ENCODE measurements at regions of chr17 and their contacts with region 1.

Region 1: DNA sequence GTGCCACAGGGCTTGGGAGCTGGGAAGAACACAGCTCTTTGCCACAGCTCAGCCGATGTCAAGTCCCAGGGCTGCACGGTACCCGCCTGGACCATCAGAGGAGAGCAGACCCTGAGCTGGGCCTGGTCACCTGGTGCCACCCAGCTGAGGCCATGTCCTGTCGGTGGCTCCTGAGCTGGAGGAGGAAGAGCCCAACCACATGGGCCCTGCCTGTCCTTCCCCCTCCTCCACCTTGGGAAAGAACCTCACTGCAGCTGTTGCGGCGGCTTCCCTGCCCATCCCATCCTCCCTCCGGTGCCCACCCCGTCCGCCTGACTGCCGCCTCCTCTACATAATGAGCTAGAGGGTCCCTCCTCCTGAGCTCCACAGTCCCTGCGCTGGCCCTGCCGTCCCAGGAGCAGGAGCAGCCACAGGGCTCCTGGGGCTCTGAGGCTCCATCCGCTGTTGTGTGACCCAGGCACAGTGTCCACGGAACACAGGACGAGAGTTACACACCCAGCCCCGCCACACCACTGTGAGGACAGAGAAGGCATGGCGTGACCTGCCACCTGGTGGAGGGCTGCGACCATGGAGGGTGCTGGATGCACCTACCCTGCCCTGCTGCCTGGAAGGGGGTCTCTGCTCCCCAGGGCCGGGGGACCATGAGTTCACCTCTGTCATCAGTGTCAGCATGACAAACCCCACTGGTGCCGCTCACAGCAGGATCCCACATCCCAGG is 21.4 kb upstream of the CHMP6 start:
- DNase-seq: peak; percentile 46 to 74 (median 64)
- H3K4me3 ChIP-seq: peak overlapping the region in 3 of 59 donors; percentile 5 to 21 (median 6)
- H3K27ac ChIP-seq: peak overlapping the region in 14 of 59 donors; percentile 21 to 92 (median 82)
- H3K27me3 ChIP-seq: no peaks in the 10 kb centered on the region
- CTCF ChIP-seq: peak in 55 of 56 donors; percentile 27 to 73 (median 55)

Region 2: GRCh38 chr17:80101011-80101945 is 868.9 kb before region 1 on chr17 and contains the start of gene GAA:
- intact Hi-C with region 1: loop called in 1 of 2 experiments (anchors 10 kb)
- DNase-seq: peak; percentile 48 to 91 (median 74)
- H3K4me3 ChIP-seq: peak within 1 kb of the TSS; percentile 66 to 99 (median 94)
- H3K27ac ChIP-seq: peak within 1 kb of the TSS in 58 of 59 donors; percentile 55 to 97 (median 90)
- H3K27me3 ChIP-seq: no peaks in the 10 kb centered on the region
- CTCF ChIP-seq: peak; percentile 51 to 97 (median 89)
- total RNA-seq, gene GAA: 35.8 to 101 (median 61.4) TPM

Region 3: DNA sequence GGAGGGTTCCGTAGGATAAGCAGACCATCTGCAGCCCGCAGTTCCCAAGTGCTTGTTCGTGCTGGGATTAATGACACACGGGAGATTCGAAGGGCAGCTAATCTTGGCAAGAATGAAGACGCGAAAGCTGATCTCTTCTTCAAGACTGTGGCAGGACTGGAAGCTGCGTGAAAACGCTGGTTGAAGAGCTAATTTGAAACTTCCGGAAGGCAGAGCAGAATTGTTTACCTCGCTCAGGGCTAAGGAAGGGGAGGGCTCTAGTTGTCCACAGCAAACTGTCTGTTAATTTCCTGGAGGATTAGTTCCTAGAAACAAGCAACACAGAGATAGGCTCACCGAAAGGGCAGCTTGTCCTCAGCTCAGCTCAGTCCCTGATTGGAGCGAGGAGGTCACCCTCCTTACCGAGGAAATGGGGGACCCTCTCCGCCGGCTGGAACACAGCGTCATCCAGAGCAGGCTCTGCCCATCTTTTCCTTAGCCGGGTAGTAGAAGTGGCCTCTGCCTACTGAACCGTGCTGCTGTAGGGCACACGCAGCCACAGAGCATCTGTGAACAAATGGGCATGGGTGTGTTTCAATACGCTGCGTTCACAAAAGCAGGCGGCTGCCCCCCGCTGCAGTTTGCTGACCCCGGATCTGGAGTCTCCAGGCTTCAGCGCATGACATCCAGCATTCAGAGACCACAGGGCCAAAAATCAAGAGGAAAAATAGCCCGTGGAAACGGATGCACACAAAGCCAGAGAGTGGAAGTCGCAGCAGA is 48.0 kb after region 1 on chr17:
- intact Hi-C with region 1: no loop called
- DNase-seq: no peak
- H3K4me3 ChIP-seq: peak overlapping the region in 58 of 59 donors; percentile 1 to 60 (median 34)
- H3K27ac ChIP-seq: peak overlapping the region in 31 of 59 donors; percentile 2 to 78 (median 44)
- H3K27me3 ChIP-seq: no peaks in the 10 kb centered on the region
- CTCF ChIP-seq: no peak